ENCODE measurements at regions of chr10 and their contacts with region 1.

Region 1: DNA sequence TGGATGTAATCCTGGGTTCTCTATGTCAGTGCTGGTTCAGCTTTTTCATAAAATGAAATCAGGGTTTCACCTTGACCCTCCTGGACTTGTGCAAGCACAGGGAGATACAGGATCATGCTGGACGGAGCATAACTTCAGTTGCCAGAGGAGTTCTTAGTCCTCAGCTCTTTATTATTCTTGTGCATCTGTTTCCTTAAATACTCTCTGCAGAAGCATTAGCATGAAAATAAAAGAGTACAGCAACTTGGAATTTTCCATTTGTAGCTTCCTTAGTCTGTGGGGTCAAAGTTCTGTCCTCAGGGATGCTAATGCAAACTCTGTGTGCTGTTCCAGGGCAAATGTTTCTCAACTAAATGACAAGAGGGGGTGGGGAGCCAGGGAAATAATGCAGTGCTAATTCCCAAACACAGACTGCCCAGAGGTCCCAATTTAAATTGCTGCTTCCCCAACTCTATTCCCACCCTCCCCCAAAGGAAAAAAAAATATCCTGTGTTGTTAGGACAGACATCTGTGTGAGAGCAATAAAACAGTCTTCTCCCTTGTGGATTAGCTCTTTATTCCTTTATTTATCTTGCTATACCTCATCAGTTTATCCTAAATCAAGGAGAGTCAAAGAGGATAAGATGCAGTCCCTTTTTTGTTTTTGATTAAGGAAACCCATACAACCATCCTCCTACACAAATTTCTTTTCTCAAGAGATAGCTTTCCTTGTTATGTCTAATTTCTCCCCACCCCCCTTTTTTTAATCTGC is 905.0 kb downstream of the LRMDA start:
- DNase-seq: no peak
- ATAC-seq: no peak
- H3K4me3 ChIP-seq: no peak overlapping the region
- H3K27ac ChIP-seq: no peak overlapping the region
- H3K4me1 ChIP-seq: peaks cover 16% of the 10 kb centered on the region
- H3K27me3 ChIP-seq: no peaks in the 10 kb centered on the region
- CTCF ChIP-seq: no peak

Region 2: GRCh38 chr10:75755528-75755927 is 580.9 kb before region 1 on chr10:
- CTCF ChIA-PET with region 1: no interaction called
- POLR2A ChIA-PET with region 1: interaction called, 11 read pairs
- intact Hi-C with region 1: no loop called
- DNase-seq: no peak
- ATAC-seq: no peak
- H3K4me3 ChIP-seq: no peak overlapping the region
- H3K27ac ChIP-seq: no peak overlapping the region
- H3K4me1 ChIP-seq: no peaks in the 10 kb centered on the region
- H3K27me3 ChIP-seq: peaks cover 58% of the 10 kb centered on the region
- CTCF ChIP-seq: no peak

Region 3: GRCh38 chr10:76074659-76075058 is 261.7 kb before region 1 on chr10:
- CTCF ChIA-PET with region 1: no interaction called
- POLR2A ChIA-PET with region 1: no interaction called
- intact Hi-C with region 1: no loop called
- DNase-seq: no peak
- ATAC-seq: no peak
- H3K4me3 ChIP-seq: no peak overlapping the region
- H3K27ac ChIP-seq: no peak overlapping the region
- H3K4me1 ChIP-seq: peaks cover 4% of the 10 kb centered on the region; the same call in 1 of the 2 replicates
- H3K27me3 ChIP-seq: peaks cover 25% of the 10 kb centered on the region; the same call in 1 of the 2 replicates
- CTCF ChIP-seq: no peak

Region 4: GRCh38 chr10:76190634-76191270 is 145.6 kb before region 1 on chr10:
- CTCF ChIA-PET with region 1: no interaction called
- POLR2A ChIA-PET with region 1: no interaction called
- intact Hi-C with region 1: loop called (anchors 5 kb)
- DNase-seq: no peak
- ATAC-seq: no peak
- H3K4me3 ChIP-seq: no peak overlapping the region
- H3K27ac ChIP-seq: no peak overlapping the region
- H3K4me1 ChIP-seq: no peaks in the 10 kb centered on the region
- H3K27me3 ChIP-seq: peaks cover 90% of the 10 kb centered on the region
- CTCF ChIP-seq: no peak

Region 5: DNA sequence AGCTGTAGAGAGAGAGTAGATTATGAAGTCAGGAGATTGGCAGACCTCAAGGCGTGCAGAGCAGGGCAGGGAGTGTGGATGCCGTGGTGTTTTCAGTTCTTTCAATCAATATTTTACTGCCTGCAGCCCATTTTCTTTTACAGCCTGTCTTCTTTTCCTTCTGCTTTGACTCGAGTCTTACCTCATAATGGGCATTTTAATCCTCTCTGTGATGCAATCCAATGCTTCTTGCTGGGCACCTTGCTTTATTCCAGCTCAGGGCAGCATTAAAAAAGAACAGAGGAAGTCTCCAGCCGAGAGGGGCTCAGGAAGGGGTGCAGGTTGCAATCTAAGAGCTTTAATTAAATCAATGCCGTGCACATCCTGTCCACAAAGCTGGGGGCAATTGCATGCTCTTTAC is 65.9 kb before region 1 on chr10:
- CTCF ChIA-PET with region 1: no interaction called
- POLR2A ChIA-PET with region 1: no interaction called
- intact Hi-C with region 1: no loop called
- DNase-seq: no peak
- ATAC-seq: no peak
- H3K4me3 ChIP-seq: no peak overlapping the region
- H3K27ac ChIP-seq: no peak overlapping the region
- H3K4me1 ChIP-seq: no peaks in the 10 kb centered on the region
- H3K27me3 ChIP-seq: peaks cover 20% of the 10 kb centered on the region; the same call in 1 of the 2 replicates
- CTCF ChIP-seq: no peak

Region 6: DNA sequence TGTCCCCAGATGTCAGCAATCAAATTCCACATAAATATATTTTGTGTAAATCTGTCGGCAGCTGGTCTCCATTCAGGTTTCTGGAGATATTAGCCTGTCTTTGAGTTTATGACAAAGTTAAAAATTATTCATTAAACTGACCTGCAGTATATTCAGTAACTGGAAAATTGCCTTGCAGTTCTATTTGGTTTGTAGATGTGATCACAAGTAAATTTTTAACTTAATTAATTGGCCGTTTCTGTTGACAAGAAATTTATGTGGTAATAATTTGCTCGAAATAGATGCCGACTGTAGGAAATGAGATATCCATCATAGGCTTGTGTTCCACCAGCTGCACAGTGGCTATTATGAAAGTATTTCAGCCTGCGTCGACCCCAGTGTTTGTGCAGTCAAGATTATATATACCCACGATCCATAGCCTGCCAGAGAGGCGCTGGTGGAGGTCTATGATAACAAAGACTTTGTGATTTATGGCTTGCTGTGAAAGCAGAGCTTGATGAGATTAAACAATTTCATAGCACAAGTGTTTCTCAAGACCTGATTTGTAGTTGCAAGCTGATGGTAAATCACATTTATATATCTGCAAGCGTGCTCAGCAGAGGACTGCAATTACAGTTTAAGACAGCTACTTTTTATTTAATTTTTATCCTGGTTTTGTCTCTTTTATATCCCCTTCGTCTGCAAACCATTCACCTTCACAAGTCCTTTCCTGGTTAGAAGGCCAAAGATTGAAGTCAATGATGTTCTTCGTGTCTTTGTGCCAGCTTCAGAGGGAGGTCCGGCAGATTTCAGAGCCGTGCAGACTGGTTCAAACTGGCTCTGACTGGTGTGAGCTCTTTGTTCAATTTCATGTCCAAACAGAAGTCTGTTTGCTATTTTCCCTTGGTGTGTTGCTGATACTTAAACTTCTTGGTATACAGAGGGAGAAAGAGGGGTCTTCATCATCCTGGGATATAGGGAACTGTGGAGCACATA is 54.0 kb before region 1 on chr10:
- CTCF ChIA-PET with region 1: no interaction called
- POLR2A ChIA-PET with region 1: no interaction called
- intact Hi-C with region 1: no loop called
- DNase-seq: no peak
- ATAC-seq: no peak; the same call in 1 of the 2 replicates
- H3K4me3 ChIP-seq: no peak overlapping the region
- H3K27ac ChIP-seq: no peak overlapping the region
- H3K4me1 ChIP-seq: peaks cover 5% of the 10 kb centered on the region; the same call in 1 of the 2 replicates
- H3K27me3 ChIP-seq: peaks cover 24% of the 10 kb centered on the region
- CTCF ChIP-seq: no peak

Region 7: GRCh38 chr10:76352300-76352699 is 15.9 kb after region 1 on chr10:
- CTCF ChIA-PET with region 1: no interaction called
- POLR2A ChIA-PET with region 1: no interaction called
- intact Hi-C with region 1: loop called (anchors 1 kb)
- DNase-seq: peak; percentile 100
- ATAC-seq: peak; percentile 100
- H3K4me3 ChIP-seq: no peak overlapping the region
- H3K27ac ChIP-seq: peak overlapping the region; percentile 59
- H3K4me1 ChIP-seq: peaks cover 23% of the 10 kb centered on the region
- H3K27me3 ChIP-seq: no peaks in the 10 kb centered on the region
- CTCF ChIP-seq: no peak

Region 8: GRCh38 chr10:76540331-76540730 is 203.9 kb after region 1 on chr10:
- CTCF ChIA-PET with region 1: no interaction called
- POLR2A ChIA-PET with region 1: no interaction called
- intact Hi-C with region 1: no loop called
- DNase-seq: no peak
- ATAC-seq: no peak
- H3K4me3 ChIP-seq: no peak overlapping the region
- H3K27ac ChIP-seq: no peak overlapping the region
- H3K4me1 ChIP-seq: no peaks in the 10 kb centered on the region
- H3K27me3 ChIP-seq: peaks cover 22% of the 10 kb centered on the region; the same call in 1 of the 2 replicates
- CTCF ChIP-seq: no peak

Region 9: GRCh38 chr10:76962851-76963250 is 626.5 kb after region 1 on chr10:
- CTCF ChIA-PET with region 1: no interaction called
- POLR2A ChIA-PET with region 1: no interaction called
- intact Hi-C with region 1: loop called (anchors 10 kb)
- DNase-seq: no peak
- ATAC-seq: no peak
- H3K4me3 ChIP-seq: no peak overlapping the region
- H3K27ac ChIP-seq: no peak overlapping the region
- H3K4me1 ChIP-seq: no peaks in the 10 kb centered on the region
- H3K27me3 ChIP-seq: no peaks in the 10 kb centered on the region
- CTCF ChIP-seq: no peak

Region 10: GRCh38 chr10:77036993-77037734 is 700.8 kb after region 1 on chr10:
- CTCF ChIA-PET with region 1: no interaction called
- POLR2A ChIA-PET with region 1: no interaction called
- intact Hi-C with region 1: loop called (anchors 10 kb)
- DNase-seq: peak; percentile 74
- ATAC-seq: 0 out of 2 replicates have a peak, but pooled peaks have one; percentile 8
- H3K4me3 ChIP-seq: no peak overlapping the region
- H3K27ac ChIP-seq: no peak overlapping the region
- H3K4me1 ChIP-seq: peaks cover 7% of the 10 kb centered on the region
- H3K27me3 ChIP-seq: no peaks in the 10 kb centered on the region
- CTCF ChIP-seq: peak; percentile 100